Pancreas (tissue), 10 donors: ENCODE measurements at regions of chrX and their contacts with region 1.

Region 1: DNA sequence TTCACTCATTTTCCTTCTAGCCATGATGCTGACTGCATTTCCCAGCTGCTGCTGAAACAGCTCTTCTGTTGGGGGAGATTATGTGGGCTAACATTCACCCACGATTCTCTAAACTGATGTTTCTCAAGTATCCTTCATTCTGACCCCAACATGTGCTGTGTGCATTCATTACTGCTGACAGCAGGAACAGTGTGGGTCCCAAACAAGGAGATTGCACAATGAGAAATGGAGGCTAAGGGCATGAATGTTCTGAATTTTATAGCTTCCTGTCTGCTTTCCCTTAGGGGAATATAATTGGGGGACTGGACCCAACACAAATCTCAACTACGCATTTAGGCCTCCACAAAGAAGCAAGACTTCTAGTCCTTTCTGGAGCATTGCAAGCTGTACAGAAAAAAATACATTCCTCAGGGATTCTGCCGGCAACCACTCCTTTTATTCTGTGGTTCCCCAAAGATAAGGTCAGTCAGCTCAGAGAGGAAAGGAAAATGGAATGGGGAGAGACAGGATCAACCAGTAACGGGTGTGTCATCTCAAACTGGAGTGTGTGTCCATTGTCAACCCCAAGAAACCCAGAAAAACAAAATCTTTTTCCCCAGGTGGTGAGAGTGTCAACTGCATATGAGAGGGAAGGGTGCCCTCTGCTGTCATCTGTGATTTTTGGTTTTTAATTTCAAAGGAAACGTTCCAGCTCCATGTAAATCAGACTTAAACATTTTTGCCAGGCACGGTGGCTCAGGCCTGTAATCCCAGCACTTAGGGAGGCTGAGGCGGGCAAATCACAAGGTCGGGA is 81.5 kb upstream of the EGFL6 start:
- DNase-seq: peak in 3 of 6 donors; percentile 11 to 48 (median 37)
- ATAC-seq: peak; percentile 82 to 92 (median 90)
- H3K4me3 ChIP-seq: no peak overlapping the region
- H3K27ac ChIP-seq: peak overlapping the region in 2 of 4 donors; percentile 49 to 61
- H3K4me1 ChIP-seq: peaks cover 0 to 8% (median 7%) of the 10 kb centered on the region in 3 donors
- H3K27me3 ChIP-seq: peaks cover 0 to 13% (median 0%) of the 10 kb centered on the region in 4 donors
- CTCF ChIP-seq: peak; percentile 23 to 51 (median 36)

Region 2: DNA sequence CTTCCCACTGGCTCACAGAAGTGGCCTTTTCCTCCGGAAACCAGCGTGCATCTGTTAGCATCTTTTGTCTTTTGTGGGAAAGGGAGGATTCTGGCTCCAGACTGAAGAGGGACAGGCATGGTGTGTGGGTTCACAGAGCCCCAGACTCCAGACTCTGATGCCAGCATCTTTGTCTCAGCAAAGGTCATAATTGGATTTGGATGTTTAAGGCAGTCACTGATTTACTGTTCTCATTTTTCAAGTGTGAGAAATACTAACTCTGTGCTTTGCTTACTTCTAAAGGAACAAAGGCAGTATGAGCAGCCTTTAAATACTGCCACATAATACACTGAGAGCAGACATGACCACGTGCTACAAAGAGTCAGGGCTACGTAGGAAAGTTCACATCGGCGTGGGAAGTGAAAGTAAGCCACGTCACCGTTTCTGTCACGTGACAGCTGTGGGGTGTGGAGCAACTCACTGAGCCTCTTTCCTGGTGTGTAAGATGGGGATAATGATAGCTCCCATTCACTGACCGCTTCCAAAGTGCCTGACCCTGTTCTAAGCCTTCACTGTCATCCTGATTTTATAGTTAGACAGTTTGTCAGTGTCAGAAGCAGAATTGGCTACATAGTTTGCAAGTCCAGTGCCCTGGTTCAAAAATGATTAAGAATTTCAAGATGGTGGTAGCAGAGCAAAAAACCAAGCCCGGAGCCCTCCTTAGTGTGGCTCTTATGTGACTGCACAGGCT is 537.8 kb before region 1 on chrX:
- intact Hi-C with region 1: loop called in 2 of 3 experiments (anchors 10 kb)
- DNase-seq: peak in 4 of 6 donors; percentile 53 to 68 (median 61)
- ATAC-seq: peak; percentile 60 to 81 (median 71)
- H3K4me3 ChIP-seq: no peak overlapping the region
- H3K27ac ChIP-seq: peak overlapping the region in 2 of 4 donors; percentile 38 to 54
- H3K4me1 ChIP-seq: peaks cover 9 to 16% (median 16%) of the 10 kb centered on the region in 3 donors
- H3K27me3 ChIP-seq: no peaks in the 10 kb centered on the region
- CTCF ChIP-seq: no peak

Region 3: DNA sequence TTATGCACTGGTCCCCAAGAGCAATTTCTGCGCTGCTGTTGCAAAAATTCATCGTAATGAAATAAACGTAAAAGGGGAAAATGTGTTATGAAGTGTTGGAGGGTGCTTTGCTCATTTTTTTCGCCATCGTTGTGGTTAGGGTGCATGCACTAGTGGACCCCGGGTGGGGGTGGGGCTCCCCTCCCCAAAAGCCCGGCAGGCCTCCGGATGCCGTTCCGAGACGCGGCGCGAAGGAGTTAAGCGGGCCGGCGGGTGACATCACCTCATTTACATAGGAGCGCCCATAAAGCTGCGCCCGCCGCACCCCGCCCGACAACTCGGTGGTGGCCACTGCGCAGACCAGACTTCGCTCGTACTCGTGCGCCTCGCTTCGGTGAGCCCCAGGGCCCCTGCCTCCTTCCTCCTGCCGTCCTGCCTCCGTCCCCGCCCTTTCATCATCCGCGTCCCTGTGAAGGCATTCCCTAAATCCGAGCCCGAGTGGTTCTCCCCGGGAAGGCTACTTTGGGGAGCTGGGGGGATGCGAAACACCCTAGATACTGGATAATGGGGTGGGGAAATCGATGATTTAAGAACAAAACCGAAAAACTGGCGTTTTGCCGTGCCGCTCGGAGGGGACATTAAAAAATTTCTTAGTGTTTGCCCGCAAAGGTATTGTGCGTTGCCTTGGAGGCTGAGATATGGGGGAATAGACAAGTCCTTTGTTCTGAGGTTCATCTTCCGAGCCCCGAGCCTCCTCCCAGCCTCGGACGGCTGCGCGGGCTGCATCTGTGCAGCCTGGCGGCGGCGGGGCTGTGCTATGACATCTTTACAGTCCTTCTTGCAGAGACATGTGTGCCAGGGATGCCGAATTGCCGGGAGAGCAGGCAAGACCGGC is 512.9 kb before region 1 on chrX and contains the start of gene TMSB4X:
- intact Hi-C with region 1: loop called in 1 of 3 experiments (anchors 5 kb)
- DNase-seq: peak; percentile 79 to 94 (median 86)
- ATAC-seq: peak; percentile 74 to 85 (median 81)
- H3K4me3 ChIP-seq: peak within 1 kb of the TSS; percentile 31 to 75 (median 60)
- H3K27ac ChIP-seq: peak within 1 kb of the TSS; percentile 67 to 96 (median 90)
- H3K4me1 ChIP-seq: peaks cover 0 to 14% (median 0%) of the 10 kb centered on the region in 3 donors
- H3K27me3 ChIP-seq: peaks cover 0 to 3% (median 0%) of the 10 kb centered on the region in 4 donors
- CTCF ChIP-seq: no peak
- total RNA-seq, gene TMSB4X: 460 to 1,697 (median 685) TPM

Region 4: DNA sequence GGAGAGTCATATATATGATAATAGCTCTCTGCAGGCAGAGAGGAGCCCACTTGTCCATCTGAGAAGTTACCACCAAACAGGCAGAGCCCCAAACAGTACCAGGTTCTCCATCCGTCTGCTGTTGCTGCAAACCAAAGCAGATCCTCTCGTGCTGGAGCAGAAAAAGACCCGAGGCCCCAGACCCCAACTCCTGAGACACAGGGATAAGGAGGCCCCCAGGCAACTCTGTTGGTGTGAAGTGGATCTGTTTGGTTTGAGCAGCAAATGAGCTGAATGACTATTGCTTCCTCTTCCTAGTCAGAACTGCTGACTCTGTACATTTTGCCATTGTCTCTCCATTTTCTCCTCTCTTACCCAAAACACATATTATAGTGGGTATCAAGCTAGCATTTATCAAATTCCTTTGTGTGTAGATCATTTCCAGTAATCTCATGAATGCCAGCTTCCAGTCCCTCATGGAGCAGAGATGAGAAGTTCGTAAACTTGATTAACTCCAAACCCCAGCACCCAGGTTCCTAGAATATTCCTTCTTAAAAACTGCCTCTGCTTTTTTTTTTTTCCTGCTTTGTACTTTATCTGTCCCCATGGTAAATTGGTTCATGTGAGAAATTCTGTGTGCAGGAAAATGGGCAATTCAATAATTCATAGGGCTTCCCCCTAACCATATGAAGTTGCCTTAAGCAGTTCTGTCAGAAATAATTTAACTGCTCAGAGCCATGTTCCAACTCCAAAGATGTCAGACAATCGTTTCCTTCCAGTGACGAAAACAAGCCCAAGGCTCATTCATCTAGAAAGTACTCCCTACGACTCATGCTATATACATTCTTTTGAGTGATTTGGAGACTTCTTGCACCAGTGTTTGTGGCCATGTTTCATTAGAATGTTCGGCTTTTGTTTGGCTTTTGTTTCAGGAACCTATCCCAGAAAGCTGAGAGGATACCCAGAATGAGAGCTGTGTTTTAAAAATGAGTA is 69.5 kb before region 1 on chrX:
- intact Hi-C with region 1: no loop called
- DNase-seq: no peak
- ATAC-seq: no peak
- H3K4me3 ChIP-seq: no peak overlapping the region
- H3K27ac ChIP-seq: no peak overlapping the region
- H3K4me1 ChIP-seq: no peaks in the 10 kb centered on the region
- H3K27me3 ChIP-seq: peaks cover 0 to 4% (median 0%) of the 10 kb centered on the region in 4 donors
- CTCF ChIP-seq: no peak